ENCODE measurements at regions of chr3 and their contacts with region 1.

Region 1: GRCh38 chr3:52407779-52408178 is 37.1 kb downstream of the SEMA3G start:
- DNase-seq: no peak
- H3K4me3 ChIP-seq: no peak overlapping the region
- H3K27me3 ChIP-seq: no peaks in the 10 kb centered on the region
- CTCF ChIP-seq: no peak

Region 2: GRCh38 chr3:52423173-52423572 is 15.4 kb after region 1 on chr3:
- CTCF ChIA-PET with region 1: interaction called, 22 read pairs
- POLR2A ChIA-PET with region 1: no interaction called
- DNase-seq: no peak
- H3K4me3 ChIP-seq: no peak overlapping the region
- H3K27me3 ChIP-seq: no peaks in the 10 kb centered on the region
- CTCF ChIP-seq: no peak

Region 3: GRCh38 chr3:52428151-52429005 is 20.6 kb after region 1 on chr3:
- CTCF ChIA-PET with region 1: interaction called, 22 read pairs
- POLR2A ChIA-PET with region 1: no interaction called
- DNase-seq: peak; percentile 43
- H3K4me3 ChIP-seq: no peak overlapping the region
- H3K27me3 ChIP-seq: no peaks in the 10 kb centered on the region
- CTCF ChIP-seq: peak; percentile 83

Region 4: DNA sequence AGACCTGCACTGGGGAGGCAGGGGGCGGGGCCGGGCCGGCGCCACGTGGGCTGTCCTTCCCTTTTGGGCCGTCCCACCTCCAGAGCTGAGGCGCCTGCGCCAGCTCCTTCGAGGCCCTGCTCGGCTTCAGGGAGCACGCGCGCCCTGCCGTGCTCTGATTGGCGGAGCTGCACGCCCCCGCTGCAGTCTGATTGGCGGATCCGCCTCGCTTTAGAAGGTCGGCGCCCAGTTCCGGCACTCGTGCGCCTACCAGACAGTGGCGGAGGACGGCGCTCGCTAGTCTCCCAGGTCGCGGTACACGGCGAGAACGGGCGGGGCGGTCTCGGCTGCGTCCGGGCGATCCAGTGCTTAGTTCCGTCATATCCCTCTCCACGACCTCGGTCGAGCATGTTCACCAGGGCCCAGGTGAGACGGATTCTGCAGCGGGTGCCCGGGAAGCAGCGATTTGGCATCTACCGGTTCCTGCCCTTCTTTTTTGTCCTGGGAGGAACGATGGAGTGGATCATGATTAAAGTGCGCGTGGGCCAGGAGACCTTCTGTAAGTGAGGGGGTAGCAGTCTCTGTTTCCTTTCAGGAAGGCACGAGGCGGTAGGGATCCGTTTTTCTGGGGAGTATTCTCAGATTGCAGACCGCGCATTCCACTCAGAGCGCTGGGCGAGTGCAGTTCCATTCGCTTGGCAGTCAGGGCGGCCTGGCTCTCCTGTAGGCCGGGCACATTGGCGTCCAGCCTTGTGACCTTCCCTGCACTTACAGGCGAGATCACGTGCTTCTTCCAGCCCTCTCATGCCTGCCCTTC is 128.8 kb after region 1 on chr3 and contains the start of gene UQCC5:
- CTCF ChIA-PET with region 1: no interaction called
- POLR2A ChIA-PET with region 1: no interaction called
- DNase-seq: peak; percentile 91
- H3K4me3 ChIP-seq: peak within 1 kb of the TSS; percentile 78
- H3K27me3 ChIP-seq: no peaks in the 10 kb centered on the region
- CTCF ChIP-seq: peak; percentile 36
- polyA plus RNA-seq, gene UQCC5: 11.9 and 12.3 TPM in 2 replicates